ENCODE measurements at regions of chr11 and their contacts with region 1.

Region 1: DNA sequence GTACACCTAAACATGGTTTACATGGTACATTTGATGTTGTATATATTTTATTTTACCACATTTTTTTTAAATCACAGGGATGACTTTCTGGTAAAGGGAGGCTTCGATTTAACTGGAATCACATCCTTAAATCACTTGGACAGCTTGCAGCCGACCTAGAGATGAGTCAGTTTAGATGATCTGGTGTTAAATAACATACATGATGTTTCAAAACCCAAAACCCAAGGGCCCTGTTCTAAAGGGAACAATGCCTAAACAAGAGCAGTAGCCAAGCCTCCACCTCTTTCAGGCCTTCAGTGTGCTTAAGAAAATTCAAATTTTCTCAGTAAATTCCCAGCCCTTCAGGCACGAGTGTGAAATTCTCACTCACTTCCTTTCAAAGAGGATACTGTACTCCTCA is 108.8 kb downstream of the WT1 start:
- DNase-seq: no peak
- ATAC-seq: no peak
- H3K4me3 ChIP-seq: no peak overlapping the region
- H3K4me3 Mint-ChIP-seq: no peak overlapping the region
- H3K27ac ChIP-seq: no peak overlapping the region
- H3K27ac Mint-ChIP-seq: no peak overlapping the region
- H3K4me1 ChIP-seq: no peaks in the 10 kb centered on the region
- H3K4me1 Mint-ChIP-seq: no peaks in the 10 kb centered on the region
- H3K27me3 ChIP-seq: no peaks in the 10 kb centered on the region
- H3K27me3 Mint-ChIP-seq: peaks cover 6 to 27% (median 18%) of the 10 kb centered on the region in 5 donors

Region 2: DNA sequence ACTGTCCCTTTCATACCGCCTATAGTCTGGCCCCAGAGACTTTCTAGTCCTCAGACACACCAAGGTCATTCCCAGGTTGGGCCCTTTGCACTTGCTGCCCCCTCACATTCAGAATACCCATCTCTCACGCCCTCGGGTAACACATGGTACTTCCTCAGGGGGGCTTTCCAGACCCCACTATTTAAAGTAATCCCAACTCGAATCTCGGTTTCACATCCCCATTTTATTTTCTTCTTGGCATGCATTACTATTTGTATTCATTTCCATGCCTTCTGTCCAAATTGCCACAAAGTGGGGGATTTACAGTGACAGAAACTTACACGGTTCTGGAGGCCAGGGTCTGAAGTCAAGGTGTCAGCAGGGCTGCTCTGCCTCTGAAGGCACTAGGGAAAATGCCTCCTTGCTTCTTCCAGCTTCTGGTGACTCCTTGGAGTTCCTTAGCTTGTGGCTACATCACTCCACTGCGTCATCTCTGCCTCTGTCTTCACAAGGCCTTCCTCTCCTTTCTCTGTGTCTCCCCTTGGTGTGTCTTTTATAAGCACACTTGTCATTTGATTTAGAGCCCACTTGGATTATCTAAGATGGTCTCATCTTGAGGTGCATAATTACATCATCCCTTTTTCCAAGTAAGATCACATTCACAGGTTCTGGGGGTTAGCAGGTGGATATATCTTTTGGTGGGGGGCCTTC is 220.5 kb before region 1 on chr11:
- CTCF ChIA-PET with region 1: no interaction called
- POLR2A ChIA-PET with region 1: no interaction called
- intact Hi-C with region 1: no loop called
- DNase-seq: no peak
- ATAC-seq: no peak
- H3K4me3 ChIP-seq: no peak overlapping the region
- H3K4me3 Mint-ChIP-seq: no peak overlapping the region
- H3K27ac ChIP-seq: no peak overlapping the region
- H3K27ac Mint-ChIP-seq: no peak overlapping the region
- H3K4me1 ChIP-seq: no peaks in the 10 kb centered on the region
- H3K4me1 Mint-ChIP-seq: no peaks in the 10 kb centered on the region
- H3K27me3 ChIP-seq: no peaks in the 10 kb centered on the region
- H3K27me3 Mint-ChIP-seq: no peaks in the 10 kb centered on the region

Region 3: DNA sequence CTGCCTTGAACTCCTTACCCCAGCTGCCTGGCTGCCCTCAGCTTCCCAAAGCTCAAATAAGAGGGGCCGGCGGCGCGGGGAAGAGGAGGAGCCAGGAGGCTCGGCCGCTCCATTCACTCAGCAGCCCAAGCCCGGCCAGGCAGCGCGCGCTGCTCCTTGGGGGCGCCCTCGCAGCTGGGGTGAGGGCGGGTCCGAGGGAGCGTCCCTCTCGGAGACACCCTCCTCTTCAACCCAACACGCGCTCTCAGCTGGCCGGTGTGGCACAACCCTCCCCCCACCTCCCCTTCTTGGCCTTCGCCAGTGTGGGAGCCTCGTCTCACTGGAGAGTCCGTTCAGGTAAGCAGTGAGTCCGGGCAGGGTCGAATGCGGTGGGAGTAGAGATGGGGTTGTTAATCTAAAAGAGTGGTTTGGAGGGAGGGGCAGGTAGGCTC is 109.0 kb after region 1 on chr11 and contains the start of gene WT1:
- CTCF ChIA-PET with region 1: no interaction called
- POLR2A ChIA-PET with region 1: no interaction called
- intact Hi-C with region 1: loop called in 1 of 2 experiments (anchors 10 kb)
- DNase-seq: no peak
- ATAC-seq: no peak
- H3K4me3 ChIP-seq: no peak within 1 kb of the TSS
- H3K4me3 Mint-ChIP-seq: peak within 1 kb of the TSS in 7 of 10 donors; percentile 24 to 72 (median 37)
- H3K27ac ChIP-seq: no peak within 1 kb of the TSS
- H3K27ac Mint-ChIP-seq: peak within 1 kb of the TSS in 1 of 9 donors; percentile 77
- H3K4me1 ChIP-seq: no peaks in the 10 kb centered on the region
- H3K4me1 Mint-ChIP-seq: peaks cover 18 to 51% (median 47%) of the 10 kb centered on the region in 7 donors
- H3K27me3 ChIP-seq: peaks cover 5 to 11% of the 10 kb centered on the region in 2 donors
- H3K27me3 Mint-ChIP-seq: peaks cover 64 to 90% (median 79%) of the 10 kb centered on the region in 5 donors
- total RNA-seq, gene WT1: not detected

Region 4: DNA sequence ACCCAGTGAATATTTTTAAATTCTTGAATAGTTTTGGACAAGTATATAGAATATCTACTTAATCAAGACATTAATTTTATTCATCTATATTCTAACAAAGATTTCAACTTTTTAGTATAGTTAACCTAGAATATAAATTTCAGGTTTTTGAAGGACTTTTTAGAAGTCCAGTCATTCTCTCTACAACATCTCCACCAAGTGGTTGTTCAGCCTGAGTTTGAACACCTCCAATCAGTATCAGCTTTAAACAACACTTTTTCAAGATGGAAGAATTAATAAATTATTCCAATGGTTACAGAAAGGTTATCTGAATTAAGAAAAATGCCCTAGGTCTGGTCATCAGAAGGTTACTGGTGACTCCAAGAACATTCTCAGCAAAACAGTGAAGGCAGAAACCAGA is 288.9 kb after region 1 on chr11:
- CTCF ChIA-PET with region 1: interaction called, 3 read pairs
- POLR2A ChIA-PET with region 1: no interaction called
- intact Hi-C with region 1: loop called (anchors 1 kb)
- DNase-seq: no peak
- ATAC-seq: no peak
- H3K4me3 ChIP-seq: no peak overlapping the region
- H3K4me3 Mint-ChIP-seq: no peak overlapping the region
- H3K27ac ChIP-seq: no peak overlapping the region
- H3K27ac Mint-ChIP-seq: no peak overlapping the region
- H3K4me1 ChIP-seq: no peaks in the 10 kb centered on the region
- H3K4me1 Mint-ChIP-seq: no peaks in the 10 kb centered on the region
- H3K27me3 ChIP-seq: no peaks in the 10 kb centered on the region
- H3K27me3 Mint-ChIP-seq: peaks cover 3 to 12% (median 11%) of the 10 kb centered on the region in 5 donors

Region 5: GRCh38 chr11:32658639-32659406 is 332.3 kb after region 1 on chr11:
- CTCF ChIA-PET with region 1: no interaction called
- POLR2A ChIA-PET with region 1: no interaction called
- intact Hi-C with region 1: no loop called
- DNase-seq: no peak
- ATAC-seq: no peak
- H3K4me3 ChIP-seq: no peak overlapping the region
- H3K4me3 Mint-ChIP-seq: no peak overlapping the region
- H3K27ac ChIP-seq: no peak overlapping the region
- H3K27ac Mint-ChIP-seq: no peak overlapping the region
- H3K4me1 ChIP-seq: no peaks in the 10 kb centered on the region
- H3K4me1 Mint-ChIP-seq: no peaks in the 10 kb centered on the region
- H3K27me3 ChIP-seq: no peaks in the 10 kb centered on the region
- H3K27me3 Mint-ChIP-seq: peaks cover 0 to 24% (median 16%) of the 10 kb centered on the region in 5 donors

Region 6: GRCh38 chr11:32792948-32793475 is 466.5 kb after region 1 on chr11:
- CTCF ChIA-PET with region 1: interaction called, 18 read pairs
- POLR2A ChIA-PET with region 1: no interaction called
- intact Hi-C with region 1: loop called in 1 of 2 experiments (anchors 1 kb)
- DNase-seq: peak; percentile 30 to 60 (median 49)
- ATAC-seq: peak; percentile 82
- H3K4me3 ChIP-seq: peak overlapping the region; percentile 38
- H3K4me3 Mint-ChIP-seq: peak overlapping the region in 7 of 10 donors; percentile 48 to 80 (median 56)
- H3K27ac ChIP-seq: no peak overlapping the region
- H3K27ac Mint-ChIP-seq: peak overlapping the region in 1 of 9 donors; percentile 59
- H3K4me1 ChIP-seq: no peaks in the 10 kb centered on the region
- H3K4me1 Mint-ChIP-seq: peaks cover 0 to 8% (median 5%) of the 10 kb centered on the region in 7 donors
- H3K27me3 ChIP-seq: no peaks in the 10 kb centered on the region
- H3K27me3 Mint-ChIP-seq: peaks cover 4 to 31% (median 9%) of the 10 kb centered on the region in 5 donors

Region 7: DNA sequence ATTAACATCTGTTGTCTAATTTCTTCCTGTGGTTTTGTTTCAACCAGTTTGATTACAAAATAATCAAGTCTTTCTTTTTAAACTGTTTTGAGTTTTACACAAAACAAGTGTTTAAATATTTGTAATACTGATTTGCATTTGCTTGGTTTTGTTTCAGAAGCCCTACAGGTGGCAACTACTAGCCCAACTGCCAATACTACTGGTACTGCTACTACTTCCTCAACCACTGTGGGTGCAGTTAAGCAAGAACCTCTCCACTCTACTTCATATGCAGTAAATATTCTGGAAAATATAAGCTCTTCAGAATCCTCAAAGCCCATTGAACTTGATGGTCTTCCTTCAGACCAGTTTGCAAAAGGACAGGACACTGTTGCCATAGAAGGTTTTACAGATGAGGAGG is 627.2 kb after region 1 on chr11:
- CTCF ChIA-PET with region 1: no interaction called
- POLR2A ChIA-PET with region 1: no interaction called
- intact Hi-C with region 1: loop called in 1 of 2 experiments (anchors 10 kb)
- DNase-seq: no peak
- ATAC-seq: no peak
- H3K4me3 ChIP-seq: no peak overlapping the region
- H3K4me3 Mint-ChIP-seq: no peak overlapping the region
- H3K27ac ChIP-seq: no peak overlapping the region
- H3K27ac Mint-ChIP-seq: no peak overlapping the region
- H3K4me1 ChIP-seq: no peaks in the 10 kb centered on the region
- H3K4me1 Mint-ChIP-seq: no peaks in the 10 kb centered on the region
- H3K27me3 ChIP-seq: no peaks in the 10 kb centered on the region
- H3K27me3 Mint-ChIP-seq: no peaks in the 10 kb centered on the region

Region 8: DNA sequence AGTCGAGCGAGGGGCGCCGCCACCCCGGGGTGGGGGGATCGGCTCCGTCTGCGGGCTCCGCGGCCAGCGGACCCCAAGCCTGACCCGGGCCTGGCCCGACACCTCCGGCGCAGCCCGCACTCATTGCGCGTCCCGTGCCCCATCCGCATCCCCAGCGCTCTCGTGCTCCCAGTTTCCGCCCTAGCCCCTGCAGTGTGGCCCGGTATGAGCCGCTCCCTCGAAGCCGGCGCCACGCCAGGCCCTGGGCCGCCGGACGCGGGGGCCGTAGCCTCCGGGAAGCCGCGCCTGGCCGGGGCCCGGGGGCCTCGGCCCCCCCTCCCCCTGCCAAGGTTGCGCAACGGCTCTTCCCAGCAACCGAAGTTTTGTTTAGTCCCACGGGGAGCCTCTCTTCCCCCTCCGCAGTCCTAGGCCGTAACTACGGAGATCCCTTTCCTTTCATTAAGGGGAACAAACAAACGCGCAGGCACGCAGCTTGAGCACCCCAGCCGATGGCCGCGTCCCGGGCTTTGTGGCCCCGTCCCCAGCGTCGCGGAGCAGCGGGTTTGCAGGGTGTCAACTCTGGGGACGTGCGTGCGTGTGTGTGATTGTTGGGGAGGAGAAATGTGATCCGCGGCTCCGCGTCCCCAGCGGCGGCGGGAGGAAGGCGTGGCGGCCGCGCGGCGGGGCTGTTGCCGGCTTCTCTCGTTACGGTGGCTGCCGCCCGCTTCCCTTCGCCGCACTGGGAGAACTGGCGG is 931.5 kb after region 1 on chr11:
- CTCF ChIA-PET with region 1: no interaction called
- POLR2A ChIA-PET with region 1: no interaction called
- intact Hi-C with region 1: no loop called
- DNase-seq: peak; percentile 67 to 83 (median 76)
- ATAC-seq: peak; percentile 71
- H3K4me3 ChIP-seq: peak overlapping the region; percentile 63
- H3K4me3 Mint-ChIP-seq: peak overlapping the region; percentile 89 to 99 (median 96)
- H3K27ac ChIP-seq: peak overlapping the region; percentile 97
- H3K27ac Mint-ChIP-seq: peak overlapping the region; percentile 93 to 99 (median 98)
- H3K4me1 ChIP-seq: peaks cover 27 to 28% of the 10 kb centered on the region in 2 donors
- H3K4me1 Mint-ChIP-seq: peaks cover 25 to 55% (median 44%) of the 10 kb centered on the region in 7 donors
- H3K27me3 ChIP-seq: no peaks in the 10 kb centered on the region
- H3K27me3 Mint-ChIP-seq: peaks cover 0 to 2% (median 0%) of the 10 kb centered on the region in 5 donors

Region 9: DNA sequence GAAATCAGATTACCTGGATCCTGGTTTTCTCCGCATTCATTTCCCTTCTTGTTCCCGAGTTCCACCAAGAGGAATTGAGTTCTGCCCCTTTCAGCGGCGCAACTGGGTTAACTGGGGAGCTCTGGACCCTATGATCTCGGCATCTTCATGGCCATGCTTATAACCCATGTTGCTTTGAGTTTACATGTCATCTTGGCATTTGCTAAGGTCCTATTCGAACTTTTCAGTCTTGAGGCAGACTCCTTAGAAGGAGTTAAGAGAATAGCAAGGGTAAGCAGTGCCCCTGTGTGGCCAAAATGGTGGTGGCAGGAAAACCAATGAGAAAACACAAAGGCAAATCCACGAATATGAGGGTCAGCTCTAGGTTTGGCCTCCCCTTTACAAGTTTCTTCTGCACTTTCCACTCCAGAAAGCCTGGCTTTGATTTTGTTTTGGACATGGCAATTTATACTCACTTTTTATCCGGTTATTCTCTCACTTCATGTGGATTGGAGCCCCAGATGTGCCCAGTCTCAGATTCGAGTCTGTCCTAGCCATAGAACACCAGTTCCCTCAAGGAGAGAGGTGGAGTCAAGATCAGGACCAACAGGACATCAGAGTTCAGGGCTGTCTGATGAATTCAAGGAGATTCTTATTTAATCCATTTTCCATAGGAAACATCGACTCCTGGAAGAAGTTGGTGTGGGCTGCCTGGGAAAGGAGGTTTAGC is 1503.1 kb after region 1 on chr11:
- CTCF ChIA-PET with region 1: no interaction called
- POLR2A ChIA-PET with region 1: no interaction called
- intact Hi-C with region 1: loop called in 1 of 2 experiments (anchors 10 kb)
- DNase-seq: peak; percentile 20 to 61 (median 54)
- ATAC-seq: peak; percentile 89
- H3K4me3 ChIP-seq: no peak overlapping the region
- H3K4me3 Mint-ChIP-seq: peak overlapping the region; percentile 74 to 92 (median 82)
- H3K27ac ChIP-seq: no peak overlapping the region
- H3K27ac Mint-ChIP-seq: no peak overlapping the region
- H3K4me1 ChIP-seq: peaks cover 4% of the 10 kb centered on the region in 2 donors
- H3K4me1 Mint-ChIP-seq: peaks cover 2 to 7% (median 6%) of the 10 kb centered on the region in 7 donors
- H3K27me3 ChIP-seq: peaks cover 0 to 10% of the 10 kb centered on the region in 2 donors
- H3K27me3 Mint-ChIP-seq: peaks cover 45 to 68% (median 66%) of the 10 kb centered on the region in 5 donors